A673 (cell line): ENCODE measurements at regions of chr7 and their contacts with region 1.

Region 1: DNA sequence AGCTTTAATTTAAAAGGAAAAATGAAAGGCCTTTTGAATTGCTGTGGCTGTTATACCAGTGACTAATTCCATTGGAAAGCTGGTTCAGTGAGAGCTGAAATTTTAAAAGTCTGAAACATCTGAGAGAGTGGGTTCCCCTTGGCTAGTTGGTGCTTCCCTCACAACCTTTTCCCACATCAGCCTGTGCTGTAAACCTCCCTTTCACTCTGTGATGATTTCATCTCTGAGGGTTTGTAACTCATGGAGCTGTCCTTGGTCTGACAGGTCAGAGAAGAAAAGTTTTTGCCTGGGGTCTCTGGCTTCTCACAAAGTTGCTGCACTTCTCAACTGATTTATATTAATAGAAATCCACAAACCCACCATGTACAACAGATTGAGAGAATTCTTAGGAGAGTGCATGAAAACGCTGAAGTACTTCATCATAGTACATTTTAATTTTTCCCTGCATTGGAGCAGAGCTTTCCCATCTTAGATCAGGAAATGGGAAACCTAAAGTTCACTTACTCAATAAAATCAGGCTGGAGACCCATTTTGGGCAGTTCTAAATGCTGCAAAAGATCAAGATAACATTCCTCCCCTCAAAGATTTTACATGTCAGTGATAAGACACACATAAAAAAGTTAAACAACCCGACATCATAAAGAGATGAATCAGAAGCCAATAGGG is 157.1 kb upstream of the MKLN1 start:
- DNase-seq: no peak
- H3K4me3 ChIP-seq: no peak overlapping the region
- H3K27ac ChIP-seq: no peak overlapping the region
- H3K4me1 ChIP-seq: no peaks in the 10 kb centered on the region
- H3K27me3 ChIP-seq: no peaks in the 10 kb centered on the region
- CTCF ChIP-seq: no peak

Region 2: DNA sequence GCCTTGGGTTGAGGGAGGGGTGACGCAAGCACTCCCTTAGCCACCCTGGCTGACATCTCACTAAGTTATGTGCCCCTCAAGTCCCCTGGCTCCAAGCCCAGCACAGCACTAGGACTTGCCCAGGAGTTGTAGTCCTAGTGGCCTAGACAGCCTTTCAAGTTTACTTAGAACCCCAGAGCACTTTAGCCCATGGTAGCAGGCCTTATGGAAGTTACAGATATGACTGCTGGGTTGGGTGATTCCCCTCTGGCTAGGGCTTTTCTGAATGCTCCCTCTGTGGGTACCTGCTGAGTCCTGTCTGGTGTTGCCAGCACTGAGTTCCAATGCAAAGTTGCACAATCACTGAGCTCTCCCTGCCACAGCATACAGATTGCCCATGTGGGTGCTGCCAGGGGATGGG is 1862.5 kb before region 1 on chr7:
- CTCF ChIA-PET with region 1: no interaction called
- POLR2A ChIA-PET with region 1: no interaction called
- intact Hi-C with region 1: no loop called
- DNase-seq: no peak
- H3K4me3 ChIP-seq: no peak overlapping the region
- H3K27ac ChIP-seq: no peak overlapping the region
- H3K4me1 ChIP-seq: no peaks in the 10 kb centered on the region
- H3K27me3 ChIP-seq: no peaks in the 10 kb centered on the region
- CTCF ChIP-seq: no peak

Region 3: GRCh38 chr7:130987112-130987511 is 183.5 kb before region 1 on chr7:
- CTCF ChIA-PET with region 1: no interaction called
- POLR2A ChIA-PET with region 1: interaction called, 12 read pairs
- intact Hi-C with region 1: no loop called
- DNase-seq: no peak
- H3K4me3 ChIP-seq: no peak overlapping the region
- H3K27ac ChIP-seq: no peak overlapping the region
- H3K4me1 ChIP-seq: peaks cover 15% of the 10 kb centered on the region
- H3K27me3 ChIP-seq: no peaks in the 10 kb centered on the region
- CTCF ChIP-seq: no peak